HepG2 (cell line): ENCODE measurements at regions of chr21 and their contacts with region 1.

Region 1: DNA sequence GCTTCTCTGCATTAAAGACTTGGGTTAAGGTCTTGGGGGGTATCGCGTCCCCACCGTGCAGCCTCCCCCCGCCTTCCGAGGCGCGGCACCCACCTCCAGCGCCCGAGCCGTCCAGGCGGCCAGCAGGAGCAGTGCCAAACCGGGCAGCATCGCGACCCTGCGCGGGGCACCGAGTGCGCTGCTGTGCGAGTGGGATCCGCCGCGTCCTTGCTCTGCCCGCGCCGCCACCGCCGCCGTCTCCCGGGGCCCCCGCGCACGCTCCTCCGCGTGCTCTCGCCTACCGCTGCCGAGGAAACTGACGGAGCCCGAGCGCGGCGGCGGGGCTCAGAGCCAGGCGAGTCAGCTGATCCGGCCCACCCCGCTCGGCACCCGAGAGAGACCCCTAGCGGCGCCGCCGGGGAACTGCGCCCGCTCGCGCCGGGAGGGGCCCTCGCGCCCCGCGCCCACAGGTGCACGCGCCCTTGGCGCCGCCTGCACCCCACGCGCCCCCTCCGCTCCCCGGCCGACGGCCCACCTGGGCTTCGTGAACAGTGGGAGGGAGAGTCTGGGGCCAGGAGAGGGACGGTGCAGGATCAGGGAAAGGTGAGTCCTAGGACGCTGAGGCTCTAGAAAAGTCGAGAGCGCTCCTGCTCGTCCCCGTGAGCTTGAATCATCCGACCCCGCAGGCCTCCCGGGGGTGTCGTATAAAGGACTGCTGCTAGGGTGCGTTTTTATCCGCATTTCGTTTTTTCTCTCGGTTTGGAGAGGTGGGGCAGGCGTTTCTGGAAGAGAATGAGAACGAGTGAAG is at the start of gene APP:
- DNase-seq: peak; percentile 31
- ATAC-seq: peak; percentile 82
- H3K4me3 ChIP-seq: peak within 1 kb of the TSS; percentile 83 to 85 (median 85)
- H3K27ac ChIP-seq: peak within 1 kb of the TSS; percentile 63
- H3K4me1 ChIP-seq: peaks cover 27% of the 10 kb centered on the region
- H3K27me3 ChIP-seq: peaks cover 2 to 19% of the 10 kb centered on the region in 2 experiments; a peak in 2 of 5 replicates
- CTCF ChIP-seq: peak; percentile 78
- EP300 ChIP-seq: no peak
- POLR2A ChIP-seq: peak; percentile 24 to 70; a peak in 2 of 4 replicates
- RAD21 ChIP-seq: peak; percentile 69
- total RNA-seq, gene APP: 33.6 and 70.6 TPM in 2 replicates

Region 2: DNA sequence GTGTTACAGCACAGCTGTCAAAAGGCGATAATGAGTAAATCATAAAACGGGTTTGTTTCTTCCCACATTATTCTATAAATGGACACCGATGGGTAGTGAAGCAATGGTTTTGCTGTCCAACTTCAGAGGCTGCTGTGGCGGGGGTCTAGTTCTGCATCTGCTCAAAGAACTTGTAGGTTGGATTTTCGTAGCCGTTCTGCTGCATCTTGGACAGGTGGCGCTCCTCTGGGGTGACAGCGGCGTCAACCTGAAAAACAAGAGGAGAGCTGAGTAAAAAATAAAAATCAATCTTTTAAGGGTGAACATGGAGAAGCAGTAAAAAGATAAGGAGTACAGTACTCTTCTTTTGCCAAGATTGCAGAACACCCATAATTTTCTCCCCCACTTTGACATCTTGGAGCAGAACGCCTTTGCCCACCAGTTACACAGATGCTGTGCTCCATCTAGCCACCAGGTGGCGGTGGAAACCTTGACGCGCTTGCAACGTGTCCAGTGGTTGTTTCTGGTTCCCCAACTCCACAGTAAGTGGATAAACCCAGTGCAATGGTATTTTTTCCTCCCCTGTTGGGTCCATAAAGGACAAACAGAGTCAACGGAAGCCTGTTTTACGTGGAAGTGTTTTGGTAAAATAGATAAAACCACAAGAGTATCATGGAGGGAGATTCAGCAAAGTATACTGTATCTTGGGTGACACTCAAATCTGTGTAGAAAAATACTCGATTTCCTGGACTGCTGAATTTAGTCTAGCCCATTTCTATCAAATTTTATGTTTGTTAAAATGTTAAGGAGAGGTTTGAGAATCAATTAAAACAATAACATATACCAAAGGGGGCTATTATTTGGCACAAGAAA is 288.9 kb before region 1 on chr21:
- CTCF ChIA-PET with region 1: no interaction called
- POLR2A ChIA-PET with region 1: no interaction called
- in situ Hi-C with region 1: loop called (anchors 10 kb)
- intact Hi-C with region 1: loop called (anchors 1 kb)
- DNase-seq: peak; percentile 39
- ATAC-seq: peak; percentile 78
- H3K4me3 ChIP-seq: no peak overlapping the region
- H3K27ac ChIP-seq: no peak overlapping the region
- H3K4me1 ChIP-seq: peaks cover 24% of the 10 kb centered on the region
- H3K27me3 ChIP-seq: no peaks in the 10 kb centered on the region
- CTCF ChIP-seq: peak; percentile 85
- EP300 ChIP-seq: no peak
- POLR2A ChIP-seq: no peak
- RAD21 ChIP-seq: peak; percentile 60; the same call in 1 of the 2 replicates

Region 3: GRCh38 chr21:25997788-25998611 is 172.7 kb before region 1 on chr21:
- CTCF ChIA-PET with region 1: no interaction called
- POLR2A ChIA-PET with region 1: no interaction called
- in situ Hi-C with region 1: no loop called
- intact Hi-C with region 1: loop called (anchors 5 kb)
- DNase-seq: peak; percentile 88
- ATAC-seq: peak; percentile 88
- H3K4me3 ChIP-seq: no peak overlapping the region
- H3K27ac ChIP-seq: peak overlapping the region; percentile 25
- H3K4me1 ChIP-seq: peaks cover 22% of the 10 kb centered on the region
- H3K27me3 ChIP-seq: no peaks in the 10 kb centered on the region
- CTCF ChIP-seq: no peak
- EP300 ChIP-seq: peak in 1 of 2 experiments; percentile 42; a peak in 2 of 4 replicates
- POLR2A ChIP-seq: no peak
- RAD21 ChIP-seq: no peak

Region 4: GRCh38 chr21:26067836-26068594 is 102.6 kb before region 1 on chr21:
- CTCF ChIA-PET with region 1: no interaction called
- POLR2A ChIA-PET with region 1: no interaction called
- in situ Hi-C with region 1: no loop called
- intact Hi-C with region 1: loop called (anchors 10 kb)
- DNase-seq: no peak
- ATAC-seq: no peak
- H3K4me3 ChIP-seq: no peak overlapping the region
- H3K27ac ChIP-seq: no peak overlapping the region
- H3K4me1 ChIP-seq: peaks cover 14% of the 10 kb centered on the region
- H3K27me3 ChIP-seq: no peaks in the 10 kb centered on the region
- CTCF ChIP-seq: no peak
- EP300 ChIP-seq: no peak
- POLR2A ChIP-seq: no peak
- RAD21 ChIP-seq: no peak